HepG2 (cell line): ENCODE measurements at regions of chr14 and their contacts with region 1.

Region 1: DNA sequence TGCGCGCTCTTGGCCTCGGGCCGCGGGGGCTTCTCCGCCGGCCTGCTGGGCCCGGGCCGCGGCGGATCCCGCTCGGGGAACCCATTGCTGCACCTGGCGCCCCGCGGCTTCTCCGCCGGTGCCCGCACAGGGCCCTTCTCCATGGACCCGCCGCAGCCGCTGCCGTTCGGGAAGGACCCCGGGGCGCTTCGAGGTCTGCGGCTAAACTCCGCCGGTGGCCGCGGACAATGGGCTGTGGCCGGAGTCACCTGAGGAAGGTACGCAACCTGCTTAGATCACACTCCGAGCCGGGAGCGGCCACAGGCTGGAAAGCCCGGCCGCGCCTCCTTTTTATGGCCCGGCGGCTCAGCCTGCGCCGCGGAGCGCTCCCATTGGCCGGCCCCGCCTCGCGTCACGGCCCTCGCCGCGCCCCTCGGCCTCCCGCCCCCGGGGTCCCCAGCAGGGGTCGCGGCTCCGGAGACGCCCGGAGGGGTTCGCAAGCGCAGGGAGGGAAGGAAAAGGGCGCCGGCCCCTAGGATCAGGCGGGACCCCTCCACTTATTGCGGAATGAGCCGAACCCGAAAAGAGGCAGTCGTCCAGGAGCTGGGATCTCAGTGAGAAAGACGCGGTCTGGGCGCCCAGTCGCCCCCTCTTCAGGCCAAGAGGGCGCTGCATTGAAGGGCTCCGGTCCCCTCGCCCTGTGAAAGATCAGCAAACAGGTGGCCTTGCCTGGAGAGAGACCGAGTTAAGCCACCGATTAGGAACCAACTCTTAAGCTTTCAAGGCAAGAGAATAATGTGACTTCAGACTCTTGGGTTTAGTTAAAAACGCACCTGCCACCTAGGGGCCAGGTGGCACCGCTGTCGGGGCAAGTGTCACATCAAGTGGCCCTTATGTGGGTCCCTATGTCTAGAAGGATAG is at the start of gene GCH1:
- DNase-seq: peak; percentile 72
- ATAC-seq: peak; percentile 94
- H3K4me3 ChIP-seq: peak within 1 kb of the TSS; percentile 82 to 98 (median 93)
- H3K27ac ChIP-seq: peak within 1 kb of the TSS; percentile 92
- H3K4me1 ChIP-seq: peaks cover 33% of the 10 kb centered on the region
- H3K27me3 ChIP-seq: no peaks in the 10 kb centered on the region; a peak in 1 of 5 replicates
- CTCF ChIP-seq: peak; percentile 72
- EP300 ChIP-seq: no peak
- POLR2A ChIP-seq: peak; percentile 98 to 99
- RAD21 ChIP-seq: peak; percentile 39; the same call in 1 of the 2 replicates
- total RNA-seq, gene GCH1: 25.2 and 33.2 TPM in 2 replicates

Region 2: DNA sequence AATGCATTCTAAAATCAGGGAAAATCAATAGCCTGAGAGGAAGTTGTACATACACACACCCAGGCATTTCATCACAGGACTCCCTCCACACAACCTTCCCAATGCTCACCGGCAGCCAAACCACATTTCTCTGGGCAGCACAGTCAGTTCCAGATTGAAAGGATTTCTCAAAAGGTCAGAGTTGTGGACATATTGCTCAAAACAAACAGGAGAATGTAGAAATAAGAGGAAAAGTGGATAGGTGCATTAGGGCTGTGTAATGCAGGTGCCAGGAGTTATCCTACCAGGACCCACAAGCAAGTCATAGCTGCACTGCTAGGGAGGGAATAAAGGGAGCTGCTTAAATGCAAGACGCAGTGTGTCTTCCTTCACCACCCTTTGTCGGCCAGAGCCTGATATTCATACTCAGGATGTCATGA is 63.1 kb before region 1 on chr14:
- CTCF ChIA-PET with region 1: no interaction called
- POLR2A ChIA-PET with region 1: interaction called, 5 read pairs
- in situ Hi-C with region 1: no loop called
- intact Hi-C with region 1: loop called (anchors 5 kb)
- DNase-seq: peak; percentile 89
- ATAC-seq: peak; percentile 74
- H3K4me3 ChIP-seq: peak overlapping the region in 1 of 3 experiments; percentile 1; a peak in 1 of 6 replicates
- H3K27ac ChIP-seq: peak overlapping the region; percentile 75
- H3K4me1 ChIP-seq: peaks cover 78% of the 10 kb centered on the region
- H3K27me3 ChIP-seq: no peaks in the 10 kb centered on the region
- CTCF ChIP-seq: no peak
- EP300 ChIP-seq: peak in 1 of 2 experiments; percentile 89; a peak in 2 of 4 replicates
- POLR2A ChIP-seq: no peak
- RAD21 ChIP-seq: no peak

Region 3: DNA sequence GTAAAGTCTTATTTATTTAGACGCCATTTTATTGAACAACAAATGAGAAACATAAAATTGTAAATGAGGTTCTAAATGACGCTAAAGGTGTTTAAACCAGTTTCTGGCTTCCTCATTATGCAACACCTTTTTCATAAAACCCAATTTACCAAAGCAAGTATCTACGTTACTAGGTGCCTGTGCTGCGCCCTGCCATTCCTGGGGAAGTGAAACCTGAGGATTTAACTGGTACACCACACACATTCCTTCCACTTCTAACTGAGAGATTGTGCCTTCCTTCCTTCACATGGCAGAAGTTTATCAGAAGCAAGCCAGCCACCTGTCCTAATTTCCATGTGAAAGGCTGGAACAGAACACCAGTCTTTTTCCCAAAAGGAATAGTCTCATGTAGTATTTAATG is 40.1 kb after region 1 on chr14:
- CTCF ChIA-PET with region 1: no interaction called
- POLR2A ChIA-PET with region 1: no interaction called
- in situ Hi-C with region 1: no loop called
- intact Hi-C with region 1: loop called (anchors 5 kb)
- DNase-seq: no peak
- ATAC-seq: no peak
- H3K4me3 ChIP-seq: no peak overlapping the region
- H3K27ac ChIP-seq: no peak overlapping the region
- H3K4me1 ChIP-seq: peaks cover 19% of the 10 kb centered on the region
- H3K27me3 ChIP-seq: no peaks in the 10 kb centered on the region
- CTCF ChIP-seq: no peak
- EP300 ChIP-seq: no peak
- POLR2A ChIP-seq: no peak
- RAD21 ChIP-seq: no peak

Region 4: DNA sequence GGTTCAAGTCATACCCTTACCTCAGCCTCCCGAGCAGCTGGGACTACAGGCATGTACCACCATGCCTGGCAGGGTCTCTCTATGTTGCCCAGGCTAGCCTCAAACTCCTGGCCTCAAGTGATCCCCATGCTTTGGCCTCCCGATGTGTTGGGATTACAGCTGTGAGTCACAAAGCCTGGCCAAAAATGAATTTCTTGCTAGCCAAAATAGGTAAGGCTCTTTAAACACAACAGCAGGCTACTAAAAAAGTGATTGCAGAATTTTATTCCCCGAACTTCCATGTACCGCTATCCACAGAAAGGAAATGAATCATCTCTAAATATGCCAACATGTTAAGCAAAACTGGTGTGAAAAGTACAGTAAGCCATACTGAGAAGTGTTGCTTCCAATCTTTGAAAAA is 73.5 kb after region 1 on chr14:
- CTCF ChIA-PET with region 1: no interaction called
- POLR2A ChIA-PET with region 1: no interaction called
- in situ Hi-C with region 1: no loop called
- intact Hi-C with region 1: loop called (anchors 10 kb)
- DNase-seq: no peak
- ATAC-seq: no peak
- H3K4me3 ChIP-seq: no peak overlapping the region
- H3K27ac ChIP-seq: no peak overlapping the region
- H3K4me1 ChIP-seq: peaks cover 10% of the 10 kb centered on the region
- H3K27me3 ChIP-seq: no peaks in the 10 kb centered on the region
- CTCF ChIP-seq: no peak
- EP300 ChIP-seq: no peak
- POLR2A ChIP-seq: no peak
- RAD21 ChIP-seq: no peak